CD4-positive, alpha-beta memory T cell (primary cell): ENCODE measurements at regions of chr1 and their contacts with region 1.

Region 1: DNA sequence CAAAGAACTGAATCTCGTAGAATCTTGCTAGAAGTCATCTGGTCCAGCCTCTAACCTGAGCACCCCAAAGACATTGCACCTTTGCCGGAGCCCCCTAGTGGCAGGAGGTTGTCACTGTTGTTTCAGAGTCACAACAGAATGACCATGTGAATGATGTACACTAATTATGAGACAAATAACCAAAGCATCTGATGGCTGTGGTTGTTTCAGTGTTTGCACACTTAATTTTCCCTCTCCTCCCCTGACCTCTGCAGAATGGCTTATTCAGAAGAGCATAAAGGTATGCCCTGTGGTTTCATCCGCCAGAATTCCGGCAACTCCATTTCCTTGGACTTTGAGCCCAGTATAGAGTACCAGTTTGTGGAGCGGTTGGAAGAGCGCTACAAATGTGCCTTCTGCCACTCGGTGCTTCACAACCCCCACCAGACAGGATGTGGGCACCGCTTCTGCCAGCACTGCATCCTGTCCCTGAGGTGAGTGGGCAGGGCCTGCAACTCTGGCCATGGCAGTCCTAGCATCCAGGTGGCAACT is 26.4 kb downstream of the TRAF5 start:
- DNase-seq: peak; percentile 42 to 65 (median 55)
- H3K4me3 ChIP-seq: peak overlapping the region; percentile 3 to 34
- H3K4me3 Mint-ChIP-seq: peak overlapping the region; percentile 77 to 92 (median 85)
- H3K27ac ChIP-seq: peak overlapping the region; percentile 25
- H3K27ac Mint-ChIP-seq: peak overlapping the region; percentile 86 to 97 (median 95)
- H3K4me1 ChIP-seq: peaks cover 63% of the 10 kb centered on the region
- H3K4me1 Mint-ChIP-seq: peaks cover 53 to 73% (median 64%) of the 10 kb centered on the region in 4 donors
- H3K27me3 ChIP-seq: no peaks in the 10 kb centered on the region
- H3K27me3 Mint-ChIP-seq: no peaks in the 10 kb centered on the region

Region 2: GRCh38 chr1:211329764-211330201 is 23.3 kb before region 1 on chr1:
- CTCF ChIA-PET with region 1: interaction called, 250 read pairs
- POLR2A ChIA-PET with region 1: interaction called, 37 read pairs
- intact Hi-C with region 1: loop called (anchors 1 kb)
- DNase-seq: peak in 2 of 5 donors; percentile 24 to 26
- H3K4me3 ChIP-seq: no peak overlapping the region
- H3K4me3 Mint-ChIP-seq: peak overlapping the region; percentile 97 to 98 (median 98)
- H3K27ac ChIP-seq: peak overlapping the region; percentile 73
- H3K27ac Mint-ChIP-seq: peak overlapping the region; percentile 89 to 99 (median 97)
- H3K4me1 ChIP-seq: peaks cover 87% of the 10 kb centered on the region
- H3K4me1 Mint-ChIP-seq: peaks cover 66 to 91% (median 79%) of the 10 kb centered on the region in 4 donors
- H3K27me3 ChIP-seq: no peaks in the 10 kb centered on the region
- H3K27me3 Mint-ChIP-seq: no peaks in the 10 kb centered on the region

Region 3: DNA sequence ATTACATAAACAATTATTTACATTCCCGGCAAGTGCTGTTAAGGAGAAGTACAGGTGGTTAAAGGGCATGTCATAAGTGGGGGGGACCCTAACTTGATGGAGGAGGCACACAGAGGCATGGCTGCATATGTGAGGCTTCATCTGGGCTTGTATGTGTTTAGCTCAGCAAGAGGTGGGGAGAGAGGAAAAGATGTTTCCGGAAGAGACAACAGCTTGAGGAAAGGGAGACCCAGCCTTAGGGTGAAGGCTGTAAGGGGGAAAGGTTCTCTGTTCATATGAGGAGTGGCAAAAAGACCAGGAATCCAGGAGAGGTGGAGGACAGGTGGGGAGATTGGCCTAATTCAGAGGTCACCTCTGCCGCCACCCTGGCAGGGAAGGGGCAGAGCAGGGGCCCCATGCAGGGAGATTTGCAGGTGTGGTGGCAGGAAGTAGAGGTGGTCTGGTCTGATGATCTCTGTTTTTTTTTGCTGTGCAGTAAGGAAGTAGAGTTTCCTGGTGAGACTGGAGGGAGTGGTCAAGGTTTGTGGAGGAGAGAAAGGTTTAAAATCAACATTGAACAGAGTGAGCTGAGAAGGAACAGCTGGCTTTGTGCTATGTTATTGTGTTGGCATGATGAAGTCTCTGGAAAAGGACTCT is 17.4 kb before region 1 on chr1:
- CTCF ChIA-PET with region 1: interaction called, 250 read pairs
- POLR2A ChIA-PET with region 1: interaction called, 27 read pairs
- intact Hi-C with region 1: no loop called
- DNase-seq: peak; percentile 25 to 50 (median 43)
- H3K4me3 ChIP-seq: peak overlapping the region; percentile 30 to 49
- H3K4me3 Mint-ChIP-seq: peak overlapping the region; percentile 75 to 90 (median 82)
- H3K27ac ChIP-seq: peak overlapping the region; percentile 57
- H3K27ac Mint-ChIP-seq: peak overlapping the region; percentile 88 to 96 (median 92)
- H3K4me1 ChIP-seq: peaks cover 99% of the 10 kb centered on the region
- H3K4me1 Mint-ChIP-seq: peaks cover 74 to 100% (median 88%) of the 10 kb centered on the region in 4 donors
- H3K27me3 ChIP-seq: no peaks in the 10 kb centered on the region
- H3K27me3 Mint-ChIP-seq: no peaks in the 10 kb centered on the region

Region 4: GRCh38 chr1:211541720-211542453 is 188.8 kb after region 1 on chr1:
- CTCF ChIA-PET with region 1: no interaction called
- POLR2A ChIA-PET with region 1: no interaction called
- intact Hi-C with region 1: no loop called
- DNase-seq: no peak
- H3K4me3 ChIP-seq: no peak overlapping the region
- H3K4me3 Mint-ChIP-seq: no peak overlapping the region
- H3K27ac ChIP-seq: no peak overlapping the region
- H3K27ac Mint-ChIP-seq: no peak overlapping the region
- H3K4me1 ChIP-seq: no peaks in the 10 kb centered on the region
- H3K4me1 Mint-ChIP-seq: peaks cover 0 to 6% (median 3%) of the 10 kb centered on the region in 4 donors
- H3K27me3 ChIP-seq: no peaks in the 10 kb centered on the region
- H3K27me3 Mint-ChIP-seq: peaks cover 0 to 5% of the 10 kb centered on the region in 2 donors

Region 5: GRCh38 chr1:211613093-211613947 is 260.3 kb after region 1 on chr1:
- CTCF ChIA-PET with region 1: no interaction called
- POLR2A ChIA-PET with region 1: no interaction called
- intact Hi-C with region 1: no loop called
- DNase-seq: no peak
- H3K4me3 ChIP-seq: no peak overlapping the region
- H3K4me3 Mint-ChIP-seq: no peak overlapping the region
- H3K27ac ChIP-seq: no peak overlapping the region
- H3K27ac Mint-ChIP-seq: peak overlapping the region in 2 of 7 donors; percentile 57 to 70
- H3K4me1 ChIP-seq: no peaks in the 10 kb centered on the region
- H3K4me1 Mint-ChIP-seq: no peaks in the 10 kb centered on the region
- H3K27me3 ChIP-seq: no peaks in the 10 kb centered on the region
- H3K27me3 Mint-ChIP-seq: no peaks in the 10 kb centered on the region